ENCODE measurements at regions of chr3 and their contacts with region 1.

Region 1: GRCh38 chr3:30606301-30607031 is at the start of gene TGFBR2:
- DNase-seq: peak; percentile 100
- H3K4me3 ChIP-seq: peak within 1 kb of the TSS; percentile 57 to 99 (median 86)
- H3K27ac ChIP-seq: peak within 1 kb of the TSS; percentile 96
- H3K4me1 ChIP-seq: peaks cover 50% of the 10 kb centered on the region
- H3K27me3 ChIP-seq: no peaks in the 10 kb centered on the region
- CTCF ChIP-seq: peak; percentile 3 to 35
- POLR2A ChIP-seq: peak; percentile 79
- total RNA-seq, gene TGFBR2: 250 and 259 TPM in 2 replicates

Region 2: GRCh38 chr3:30286007-30286669 is 320.3 kb before region 1 on chr3:
- CTCF ChIA-PET with region 1: interaction called, 9 read pairs
- POLR2A ChIA-PET with region 1: interaction called, 4 read pairs
- dilution Hi-C with region 1: no loop called
- intact Hi-C with region 1: loop called (anchors 1 kb)
- DNase-seq: peak; percentile 99
- H3K4me3 ChIP-seq: no peak overlapping the region
- H3K27ac ChIP-seq: peak overlapping the region; percentile 60
- H3K4me1 ChIP-seq: peaks cover 70% of the 10 kb centered on the region
- H3K27me3 ChIP-seq: no peaks in the 10 kb centered on the region
- CTCF ChIP-seq: no peak
- POLR2A ChIP-seq: peak; percentile 61

Region 3: GRCh38 chr3:30518181-30518864 is 88.1 kb before region 1 on chr3:
- CTCF ChIA-PET with region 1: interaction called, 24 read pairs
- POLR2A ChIA-PET with region 1: interaction called, 13 read pairs
- dilution Hi-C with region 1: no loop called
- intact Hi-C with region 1: loop called (anchors 1 kb)
- DNase-seq: peak; percentile 99
- H3K4me3 ChIP-seq: no peak overlapping the region
- H3K27ac ChIP-seq: peak overlapping the region; percentile 93
- H3K4me1 ChIP-seq: peaks cover 66% of the 10 kb centered on the region
- H3K27me3 ChIP-seq: no peaks in the 10 kb centered on the region
- CTCF ChIP-seq: peak; percentile 17 to 37
- POLR2A ChIP-seq: peak; percentile 81

Region 4: GRCh38 chr3:30544812-30545211 is 61.7 kb before region 1 on chr3:
- CTCF ChIA-PET with region 1: interaction called, 8 read pairs
- POLR2A ChIA-PET with region 1: interaction called, 13 read pairs
- dilution Hi-C with region 1: no loop called
- intact Hi-C with region 1: loop called (anchors 1 kb)
- DNase-seq: peak; percentile 99
- H3K4me3 ChIP-seq: no peak overlapping the region
- H3K27ac ChIP-seq: peak overlapping the region; percentile 95
- H3K4me1 ChIP-seq: peaks cover 37% of the 10 kb centered on the region
- H3K27me3 ChIP-seq: no peaks in the 10 kb centered on the region
- CTCF ChIP-seq: no peak
- POLR2A ChIP-seq: no peak

Region 5: GRCh38 chr3:30693470-30694120 is 87.1 kb after region 1 on chr3:
- CTCF ChIA-PET with region 1: interaction called, 11 read pairs
- POLR2A ChIA-PET with region 1: interaction called, 5 read pairs
- dilution Hi-C with region 1: no loop called
- intact Hi-C with region 1: no loop called
- DNase-seq: peak; percentile 85
- H3K4me3 ChIP-seq: no peak overlapping the region
- H3K27ac ChIP-seq: peak overlapping the region; percentile 25
- H3K4me1 ChIP-seq: peaks cover 45% of the 10 kb centered on the region
- H3K27me3 ChIP-seq: no peaks in the 10 kb centered on the region
- CTCF ChIP-seq: peak; percentile 57 to 65
- POLR2A ChIP-seq: peak; percentile 24

Region 6: GRCh38 chr3:30779686-30780287 is 173.3 kb after region 1 on chr3:
- CTCF ChIA-PET with region 1: no interaction called
- POLR2A ChIA-PET with region 1: no interaction called
- dilution Hi-C with region 1: no loop called
- intact Hi-C with region 1: no loop called
- DNase-seq: peak; percentile 26
- H3K4me3 ChIP-seq: no peak overlapping the region
- H3K27ac ChIP-seq: no peak overlapping the region
- H3K4me1 ChIP-seq: peaks cover 7% of the 10 kb centered on the region
- H3K27me3 ChIP-seq: peaks cover 8 to 32% of the 10 kb centered on the region in 2 experiments
- CTCF ChIP-seq: peak; percentile 25 to 32
- POLR2A ChIP-seq: no peak